Astrocyte of the cerebellum (primary cell): ENCODE measurements at regions of chr2 and their contacts with region 1.

Region 1: DNA sequence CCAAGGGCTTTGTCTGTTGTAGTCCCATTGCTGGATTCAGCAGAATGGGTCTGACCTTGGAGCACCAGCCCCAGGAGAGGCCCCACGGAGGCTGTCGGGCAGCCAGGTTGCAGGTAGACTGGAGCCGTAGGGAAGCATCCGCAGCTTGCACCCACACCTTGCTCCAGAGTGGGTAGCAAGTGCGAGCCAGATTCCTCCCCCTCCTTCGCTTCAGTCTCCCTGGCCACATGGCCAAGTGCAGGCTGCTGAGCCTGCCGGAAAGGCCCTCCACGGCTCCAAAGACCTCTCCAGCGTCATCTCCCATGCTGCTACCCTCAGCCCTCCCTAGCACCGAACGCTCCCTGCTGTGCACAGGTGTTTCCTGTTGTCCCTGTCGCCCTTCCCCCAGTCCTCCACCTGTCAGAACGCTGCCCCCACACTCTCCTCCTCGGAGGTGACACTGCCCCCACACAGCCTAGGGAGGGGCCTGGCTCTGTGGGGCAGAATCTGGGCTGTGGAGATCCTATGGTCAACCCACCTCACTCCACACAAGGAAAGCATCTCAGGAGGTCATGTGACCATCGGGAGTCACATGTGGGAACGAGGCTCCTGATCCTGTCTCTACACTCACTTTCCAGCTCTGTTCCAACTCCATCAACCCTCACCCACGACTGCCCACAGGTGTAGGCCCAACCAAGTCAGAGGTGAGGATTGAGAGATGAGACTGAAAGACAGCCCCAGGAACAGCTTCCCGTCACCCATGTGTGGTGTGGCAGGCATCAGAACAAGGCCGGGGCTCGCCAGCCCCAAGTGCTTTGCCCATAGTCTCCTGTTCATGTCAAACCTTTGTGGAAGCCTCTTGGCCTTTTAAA is 8.3 kb downstream of the KCNF1 start:
- DNase-seq: no peak
- H3K4me3 ChIP-seq: no peak overlapping the region
- CTCF ChIP-seq: no peak

Region 2: GRCh38 chr2:10846110-10846861 is 73.7 kb before region 1 on chr2:
- in situ Hi-C with region 1: loop called (anchors 5 kb)
- DNase-seq: no peak
- H3K4me3 ChIP-seq: no peak overlapping the region
- CTCF ChIP-seq: no peak